Ascending aorta (tissue), 2 donors: ENCODE measurements at regions of chr20 and their contacts with region 1.

Region 1: DNA sequence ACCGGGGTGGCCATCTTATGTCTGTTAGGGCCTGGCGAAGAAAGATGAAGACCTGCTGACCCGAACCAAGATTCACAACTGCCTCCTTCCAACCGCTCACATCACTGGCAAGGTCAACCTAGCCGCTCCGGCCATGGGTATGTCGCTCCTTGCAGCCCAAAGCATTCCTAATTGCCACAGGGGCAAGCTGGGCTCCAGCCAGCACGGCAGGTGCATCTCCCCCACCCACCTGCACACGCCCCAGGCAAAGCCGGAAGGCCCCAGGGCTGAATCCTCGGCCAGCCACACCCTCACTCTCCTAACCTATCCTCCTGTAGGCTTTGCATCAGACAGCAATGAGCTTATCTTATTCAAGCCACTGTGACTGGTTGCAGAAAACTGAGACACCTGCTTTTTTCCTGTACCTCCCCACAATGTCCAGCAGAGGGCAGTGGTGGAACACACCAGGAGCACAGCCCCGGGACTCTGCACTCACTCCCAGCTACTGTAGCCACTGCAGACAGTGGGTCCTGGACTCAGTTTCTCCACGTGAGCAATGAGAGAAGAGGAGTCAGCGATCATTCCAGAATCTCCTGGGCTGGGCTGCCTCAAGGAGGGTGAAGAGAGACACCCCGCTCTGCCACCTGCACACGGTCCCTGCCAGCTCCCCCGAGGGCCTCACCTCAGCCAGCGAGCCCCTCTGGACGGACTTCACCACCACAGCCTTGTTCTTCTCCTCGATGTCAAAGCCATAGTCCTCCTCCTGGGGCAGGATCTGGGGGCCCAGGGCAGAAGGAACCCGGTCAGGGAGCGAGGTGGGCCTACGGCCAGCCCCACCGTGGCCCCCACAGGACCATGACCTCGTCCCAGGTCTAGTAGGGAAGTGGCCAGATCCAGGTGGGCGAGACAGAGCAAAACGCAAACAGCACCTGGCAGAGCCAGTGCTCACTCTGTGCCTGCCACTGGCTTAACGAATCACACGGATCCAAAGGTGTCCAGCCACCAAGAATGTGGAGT is 170.0 kb downstream of the PREX1 start:
- DNase-seq: peak; percentile 21 to 81
- H3K4me3 ChIP-seq: no peak overlapping the region
- H3K27ac ChIP-seq: peak overlapping the region; percentile 29 to 59
- H3K4me1 ChIP-seq: peaks cover 7 to 35% of the 10 kb centered on the region in 2 donors
- H3K27me3 ChIP-seq: no peaks in the 10 kb centered on the region
- CTCF ChIP-seq: peak; percentile 93 to 98 (median 95)

Region 2: GRCh38 chr20:48682529-48683251 is 24.9 kb after region 1 on chr20:
- intact Hi-C with region 1: loop called (anchors 2 kb)
- DNase-seq: peak in 1 of 2 donors; percentile 92
- H3K4me3 ChIP-seq: peak overlapping the region; percentile 14 to 43
- H3K27ac ChIP-seq: peak overlapping the region; percentile 61 to 77
- H3K4me1 ChIP-seq: peaks cover 24 to 47% of the 10 kb centered on the region in 2 donors
- H3K27me3 ChIP-seq: no peaks in the 10 kb centered on the region
- CTCF ChIP-seq: no peak

Region 3: GRCh38 chr20:48697879-48698724 is 40.3 kb after region 1 on chr20:
- intact Hi-C with region 1: loop called (anchors 5 kb)
- DNase-seq: peak; percentile 59 to 95
- H3K4me3 ChIP-seq: no peak overlapping the region
- H3K27ac ChIP-seq: peak overlapping the region; percentile 86 to 91
- H3K4me1 ChIP-seq: peaks cover 6 to 35% of the 10 kb centered on the region in 2 donors
- H3K27me3 ChIP-seq: no peaks in the 10 kb centered on the region
- CTCF ChIP-seq: no peak

Region 4: GRCh38 chr20:48828022-48828743 is 170.4 kb after region 1 on chr20:
- intact Hi-C with region 1: loop called (anchors 1 kb)
- DNase-seq: peak; percentile 50 to 88
- H3K4me3 ChIP-seq: peak overlapping the region; percentile 75 to 88
- H3K27ac ChIP-seq: peak overlapping the region; percentile 47 to 76
- H3K4me1 ChIP-seq: peaks cover 9 to 29% of the 10 kb centered on the region in 2 donors
- H3K27me3 ChIP-seq: no peaks in the 10 kb centered on the region
- CTCF ChIP-seq: peak in 1 of 3 experiments; percentile 62

Region 5: DNA sequence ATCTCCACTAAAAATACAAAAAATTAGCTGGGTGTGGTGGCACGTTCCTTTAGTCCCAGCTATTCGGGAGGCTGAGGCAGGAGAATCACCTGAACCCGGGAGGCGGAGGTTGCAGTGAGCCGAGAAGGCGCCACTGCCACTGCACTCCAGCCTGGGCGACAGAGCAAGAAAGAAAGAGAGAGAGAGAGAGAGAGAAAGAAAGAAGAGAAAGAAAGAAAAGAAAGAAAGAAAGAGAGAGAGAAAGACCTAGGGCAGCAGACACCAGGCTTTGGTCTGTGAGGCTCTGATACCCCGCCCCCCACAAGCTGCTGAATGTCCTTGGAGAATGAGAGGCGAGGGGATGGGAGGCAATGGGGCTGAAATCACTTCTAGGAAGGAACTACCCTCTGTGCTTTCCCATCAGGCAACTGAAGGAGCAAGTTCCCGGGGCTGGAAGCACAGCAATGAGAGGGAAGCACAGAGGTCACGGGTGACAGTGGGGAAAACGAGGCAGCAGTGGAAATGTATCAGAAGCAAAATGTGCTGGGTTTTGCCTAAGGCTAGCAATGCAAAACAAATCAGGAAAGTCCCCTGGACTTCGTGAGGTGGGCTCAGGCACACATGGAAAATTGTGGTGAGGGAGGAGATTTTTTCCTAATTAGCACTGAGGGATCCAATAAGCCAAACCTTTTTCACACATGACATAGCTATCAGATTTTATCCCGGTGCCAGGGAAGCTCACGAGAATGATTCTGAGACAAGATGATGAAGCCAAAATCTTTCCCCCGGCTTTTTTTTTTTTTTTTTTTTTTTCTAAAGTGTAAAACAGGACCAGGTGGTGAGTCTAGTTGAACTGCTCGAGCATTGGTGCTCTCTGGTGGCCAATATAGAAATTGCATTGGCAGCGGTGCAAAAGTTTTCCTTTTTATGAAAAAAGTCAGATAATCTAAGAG is 246.9 kb after region 1 on chr20:
- intact Hi-C with region 1: loop called (anchors 1 kb)
- DNase-seq: peak in 1 of 2 donors; percentile 78
- H3K4me3 ChIP-seq: no peak overlapping the region
- H3K27ac ChIP-seq: no peak overlapping the region
- H3K4me1 ChIP-seq: peaks cover 3 to 4% of the 10 kb centered on the region in 2 donors
- H3K27me3 ChIP-seq: no peaks in the 10 kb centered on the region
- CTCF ChIP-seq: peak; percentile 69 to 87 (median 81)

Region 6: DNA sequence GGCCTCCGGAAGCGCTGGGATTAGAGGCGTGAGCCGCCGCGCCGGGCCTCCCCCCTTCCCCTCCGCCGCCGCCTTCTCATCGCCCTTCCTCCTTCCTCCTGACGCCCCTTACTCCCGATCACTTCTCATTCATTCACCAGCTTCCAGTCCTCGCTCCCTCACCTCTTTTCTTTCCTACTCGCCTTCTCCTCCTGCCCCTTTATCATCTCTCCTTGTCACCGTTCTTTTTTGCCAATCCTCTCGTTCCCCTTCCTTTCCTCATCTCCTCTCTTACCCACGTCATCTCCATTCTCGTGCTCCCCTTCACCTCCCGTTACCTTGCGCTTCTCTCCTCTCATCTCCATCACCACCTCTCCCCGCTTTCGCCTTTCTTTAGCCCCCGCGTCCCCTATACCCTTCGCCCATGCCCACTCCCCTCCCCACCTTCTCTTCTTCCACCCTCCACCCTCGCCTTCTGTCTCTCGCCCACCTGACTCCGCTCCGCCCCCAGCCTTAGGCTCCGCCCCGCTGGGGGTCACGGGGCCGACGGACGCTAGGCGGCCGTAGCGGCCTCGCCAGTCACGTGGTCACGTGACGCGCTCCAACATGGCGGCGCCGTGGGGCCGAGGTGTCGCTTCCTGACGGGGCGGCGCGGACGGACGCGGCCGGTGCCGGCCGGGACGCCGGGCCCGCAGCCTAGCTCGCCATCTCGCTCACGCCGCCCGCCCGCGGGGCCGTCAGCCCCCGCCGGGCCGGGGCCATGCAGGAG is 263.6 kb after region 1 on chr20 and contains the start of gene ARFGEF2:
- intact Hi-C with region 1: loop called (anchors 5 kb)
- DNase-seq: peak; percentile 73 to 95
- H3K4me3 ChIP-seq: peak within 1 kb of the TSS; percentile 91 to 99
- H3K27ac ChIP-seq: peak within 1 kb of the TSS; percentile 89 to 96
- H3K4me1 ChIP-seq: peaks cover 12 to 28% of the 10 kb centered on the region in 2 donors
- H3K27me3 ChIP-seq: no peaks in the 10 kb centered on the region
- CTCF ChIP-seq: peak in 2 of 3 experiments; percentile 13 to 36
- total RNA-seq, gene ARFGEF2: 7.9 TPM

Region 7: GRCh38 chr20:49812463-49813304 is 1154.9 kb after region 1 on chr20 and contains the start of gene SLC9A8:
- intact Hi-C with region 1: no loop called
- DNase-seq: peak; percentile 73 to 96
- H3K4me3 ChIP-seq: peak within 1 kb of the TSS; percentile 72 to 94
- H3K27ac ChIP-seq: peak within 1 kb of the TSS; percentile 89 to 96
- H3K4me1 ChIP-seq: peaks cover 0 to 8% of the 10 kb centered on the region in 2 donors
- H3K27me3 ChIP-seq: no peaks in the 10 kb centered on the region
- CTCF ChIP-seq: peak in 2 of 3 experiments; percentile 38 to 39
- total RNA-seq, gene SLC9A8: 9.7 TPM